ENCODE measurements at regions of chr3 and their contacts with region 1.

Region 1: GRCh38 chr3:132283440-132283839 is 33.8 kb upstream of the ACP3 start:
- DNase-seq: no peak
- ATAC-seq: peak; percentile 34 to 89 (median 78)
- H3K4me3 ChIP-seq: no peak overlapping the region
- H3K27ac ChIP-seq: peak overlapping the region in 2 of 12 donors; percentile 52 to 90
- H3K4me1 ChIP-seq: peaks cover 0 to 19% (median 0%) of the 10 kb centered on the region in 12 donors
- H3K27me3 ChIP-seq: no peaks in the 10 kb centered on the region
- CTCF ChIP-seq: no peak
- POLR2A ChIP-seq: no peak

Region 2: GRCh38 chr3:132317229-132317948 is 33.9 kb after region 1 on chr3 and contains the start of gene ACP3:
- intact Hi-C with region 1: loop called in 1 of 10 experiments (anchors 5 kb)
- DNase-seq: peak; percentile 35 to 63 (median 44)
- ATAC-seq: peak; percentile 80 to 96 (median 89)
- H3K4me3 ChIP-seq: peak within 1 kb of the TSS in 5 of 12 donors; percentile 2 to 48 (median 5)
- H3K27ac ChIP-seq: peak within 1 kb of the TSS in 11 of 12 donors; percentile 5 to 87 (median 36)
- H3K4me1 ChIP-seq: peaks cover 0 to 17% (median 3%) of the 10 kb centered on the region in 12 donors
- H3K27me3 ChIP-seq: no peaks in the 10 kb centered on the region
- CTCF ChIP-seq: no peak
- POLR2A ChIP-seq: no peak
- total RNA-seq, gene ACP3: 0.21 to 6.2 (median 1.0) TPM in 8 of 9 donors, not detected in the other

Region 3: GRCh38 chr3:132432639-132433038 is 149.2 kb after region 1 on chr3:
- intact Hi-C with region 1: no loop called
- DNase-seq: no peak
- ATAC-seq: no peak
- H3K4me3 ChIP-seq: no peak overlapping the region
- H3K27ac ChIP-seq: peak overlapping the region in 1 of 12 donors; percentile 17
- H3K4me1 ChIP-seq: peaks cover 0 to 41% (median 2%) of the 10 kb centered on the region in 12 donors
- H3K27me3 ChIP-seq: no peaks in the 10 kb centered on the region
- CTCF ChIP-seq: no peak
- POLR2A ChIP-seq: no peak

Region 4: GRCh38 chr3:132522353-132522752 is 238.9 kb after region 1 on chr3:
- intact Hi-C with region 1: no loop called
- DNase-seq: no peak
- ATAC-seq: no peak
- H3K4me3 ChIP-seq: no peak overlapping the region
- H3K27ac ChIP-seq: no peak overlapping the region
- H3K4me1 ChIP-seq: no peaks in the 10 kb centered on the region
- H3K27me3 ChIP-seq: no peaks in the 10 kb centered on the region
- CTCF ChIP-seq: no peak
- POLR2A ChIP-seq: no peak